ENCODE measurements at regions of chr6 and their contacts with region 1.

Region 1: GRCh38 chr6:52984247-52984646 is 10.8 kb downstream of the GSTA4 start:
- DNase-seq: no peak

Region 2: DNA sequence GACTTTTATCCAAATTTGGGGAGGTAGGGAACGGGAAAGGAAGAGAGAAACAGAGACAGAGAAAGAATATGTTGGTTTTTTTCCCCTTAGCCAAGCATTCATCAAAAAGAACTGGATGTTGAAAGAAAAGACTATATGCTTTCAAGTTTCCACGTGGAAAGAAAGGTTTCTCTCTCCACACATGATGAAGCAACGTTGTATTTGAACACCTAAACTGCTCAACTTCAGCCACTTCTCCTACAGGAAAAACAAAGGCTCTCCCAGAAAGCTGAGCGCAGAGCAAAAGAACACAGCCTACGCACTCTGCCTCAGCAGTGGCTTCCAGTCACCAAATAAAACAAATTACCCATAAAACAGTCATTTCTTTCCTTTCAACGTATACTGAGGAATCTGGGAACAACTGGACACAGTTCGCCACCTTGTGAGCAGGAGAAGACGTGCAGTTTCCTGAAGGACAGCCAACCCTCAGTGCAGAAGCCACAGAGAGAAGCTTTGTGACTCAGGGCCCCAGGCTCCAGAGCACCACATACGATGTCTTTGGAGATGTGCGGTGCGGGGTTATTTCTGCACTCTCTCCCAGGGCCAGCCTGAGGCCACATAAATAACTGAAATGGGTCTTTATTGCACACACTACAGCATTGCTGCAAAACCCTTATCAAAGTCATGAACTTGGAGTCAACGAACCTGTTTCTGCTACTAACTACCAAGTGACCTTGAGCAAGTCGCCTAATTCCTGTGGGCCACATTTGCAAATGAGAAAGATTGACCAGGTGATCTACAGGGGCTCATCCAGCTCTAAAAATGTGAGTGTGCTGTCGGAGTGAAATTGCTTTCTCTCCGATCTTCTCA is 750.0 kb before region 1 on chr6:
- intact Hi-C with region 1: no loop called
- DNase-seq: no peak

Region 3: DNA sequence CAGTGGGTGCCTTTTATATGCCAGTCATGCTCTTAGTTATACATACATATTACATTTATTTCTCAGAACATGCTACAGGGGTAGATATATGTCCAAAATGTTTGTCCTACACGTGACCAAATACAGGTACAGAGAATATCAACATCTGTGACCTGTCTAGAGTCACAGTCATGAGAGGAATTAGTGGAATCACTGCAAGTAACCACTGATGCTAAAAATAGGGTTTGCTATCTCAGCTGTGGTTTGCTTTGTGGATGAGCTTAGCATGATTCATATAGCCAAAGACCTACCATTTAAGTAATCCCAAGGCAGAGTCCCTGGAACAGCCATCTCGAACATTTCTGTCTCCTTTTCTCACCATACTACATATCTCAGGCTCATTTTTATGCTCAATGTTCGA is 107.1 kb before region 1 on chr6:
- intact Hi-C with region 1: loop called in 1 of 2 experiments (anchors 10 kb)
- DNase-seq: no peak

Measured in posterior vena cava (tissue), 2 donors.